ENCODE measurements at regions of chr4 and their contacts with region 1.

Region 1: GRCh38 chr4:79178760-79179159 is 147.1 kb downstream of the NAA11 start:
- DNase-seq: peak; percentile 48
- H3K4me3 ChIP-seq: no peak overlapping the region
- H3K27ac ChIP-seq: no peak overlapping the region
- H3K4me1 ChIP-seq: peaks cover 13% of the 10 kb centered on the region
- H3K27me3 ChIP-seq: no peaks in the 10 kb centered on the region
- CTCF ChIP-seq: no peak
- POLR2A ChIP-seq: no peak

Region 2: DNA sequence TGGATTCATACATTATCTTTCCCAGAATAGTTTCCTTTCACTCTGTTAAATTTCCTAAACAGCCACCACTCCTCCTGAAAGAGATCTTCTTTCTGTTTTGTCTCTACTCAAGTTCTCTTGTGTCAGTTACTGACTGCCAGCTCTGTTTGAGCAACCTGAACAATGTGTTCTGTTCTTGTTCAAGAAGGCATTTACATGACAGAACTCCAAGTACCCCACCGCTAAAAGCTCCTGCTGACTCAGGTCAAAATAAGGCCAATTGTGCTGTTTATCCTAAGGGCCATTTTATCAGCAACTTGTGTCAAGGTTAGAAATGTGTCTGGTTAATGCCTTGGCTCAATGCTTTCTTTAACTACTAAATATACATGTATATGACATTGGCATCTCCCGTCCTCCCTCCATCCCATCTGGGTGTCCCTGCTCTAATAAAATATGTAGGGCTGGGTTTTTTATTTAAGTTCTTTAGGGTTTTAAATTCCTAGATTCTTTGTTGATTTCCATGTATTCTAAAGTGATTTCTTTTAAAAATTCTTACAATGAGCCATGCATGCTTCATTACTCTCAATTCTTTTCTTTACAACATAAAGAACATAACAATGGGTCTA is 95.3 kb before region 1 on chr4:
- intact Hi-C with region 1: loop called (anchors 10 kb)
- DNase-seq: peak; percentile 78
- H3K4me3 ChIP-seq: peak overlapping the region in 1 of 2 donors; percentile 7
- H3K27ac ChIP-seq: peak overlapping the region; percentile 70 to 79
- H3K4me1 ChIP-seq: no peaks in the 10 kb centered on the region
- H3K27me3 ChIP-seq: no peaks in the 10 kb centered on the region
- CTCF ChIP-seq: no peak
- POLR2A ChIP-seq: no peak

Measured in prostate gland (tissue), 2 donors.